Calu3 (cell line): ENCODE measurements at regions of chr9 and their contacts with region 1.

Region 1: GRCh38 chr9:98998441-98999151 is 54.9 kb downstream of the COL15A1 start:
- DNase-seq: peak; percentile 77
- H3K4me3 Mint-ChIP-seq: no peak overlapping the region
- H3K27ac Mint-ChIP-seq: no peak overlapping the region
- H3K4me1 Mint-ChIP-seq: peaks cover 3% of the 10 kb centered on the region
- H3K27me3 Mint-ChIP-seq: peaks cover 79% of the 10 kb centered on the region
- CTCF ChIP-seq: peak; percentile 73

Region 2: GRCh38 chr9:98848450-98849149 is 150.0 kb before region 1 on chr9:
- CTCF ChIA-PET with region 1: interaction called, 11 read pairs
- intact Hi-C with region 1: loop called (anchors 1 kb)
- DNase-seq: peak; percentile 90
- H3K4me3 Mint-ChIP-seq: no peak overlapping the region
- H3K27ac Mint-ChIP-seq: peak overlapping the region; percentile 77
- H3K4me1 Mint-ChIP-seq: peaks cover 10% of the 10 kb centered on the region
- H3K27me3 Mint-ChIP-seq: no peaks in the 10 kb centered on the region
- CTCF ChIP-seq: peak; percentile 56

Region 3: DNA sequence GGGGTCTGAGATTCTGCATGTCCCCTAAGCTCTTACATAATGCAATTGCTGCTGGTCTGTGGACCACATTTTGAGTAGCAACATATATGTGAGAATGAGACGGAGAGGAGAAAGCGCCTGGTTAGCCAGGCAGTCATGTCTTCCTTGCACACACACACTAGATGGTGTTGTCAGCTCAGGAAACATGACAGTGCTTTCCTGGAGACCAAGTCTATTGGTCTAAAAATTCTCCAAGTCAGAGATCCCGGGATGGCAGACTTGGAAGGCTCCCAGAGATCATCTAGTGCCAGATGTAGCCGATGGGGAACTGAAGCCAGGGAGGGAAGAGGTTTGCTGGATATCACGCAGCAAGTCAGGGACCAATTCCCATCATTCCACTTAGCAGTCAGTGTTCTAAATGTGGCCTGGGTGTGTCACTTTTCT is 137.7 kb before region 1 on chr9:
- CTCF ChIA-PET with region 1: no interaction called
- intact Hi-C with region 1: loop called (anchors 5 kb)
- DNase-seq: no peak
- H3K4me3 Mint-ChIP-seq: no peak overlapping the region
- H3K27ac Mint-ChIP-seq: no peak overlapping the region
- H3K4me1 Mint-ChIP-seq: no peaks in the 10 kb centered on the region
- H3K27me3 Mint-ChIP-seq: peaks cover 13% of the 10 kb centered on the region
- CTCF ChIP-seq: no peak

Region 4: GRCh38 chr9:99140685-99141314 is 142.2 kb after region 1 on chr9:
- CTCF ChIA-PET with region 1: interaction called, 3 read pairs
- intact Hi-C with region 1: loop called (anchors 1 kb)
- DNase-seq: peak; percentile 19
- H3K4me3 Mint-ChIP-seq: no peak overlapping the region
- H3K27ac Mint-ChIP-seq: no peak overlapping the region
- H3K4me1 Mint-ChIP-seq: peaks cover 9% of the 10 kb centered on the region
- H3K27me3 Mint-ChIP-seq: no peaks in the 10 kb centered on the region
- CTCF ChIP-seq: peak; percentile 31

Region 5: DNA sequence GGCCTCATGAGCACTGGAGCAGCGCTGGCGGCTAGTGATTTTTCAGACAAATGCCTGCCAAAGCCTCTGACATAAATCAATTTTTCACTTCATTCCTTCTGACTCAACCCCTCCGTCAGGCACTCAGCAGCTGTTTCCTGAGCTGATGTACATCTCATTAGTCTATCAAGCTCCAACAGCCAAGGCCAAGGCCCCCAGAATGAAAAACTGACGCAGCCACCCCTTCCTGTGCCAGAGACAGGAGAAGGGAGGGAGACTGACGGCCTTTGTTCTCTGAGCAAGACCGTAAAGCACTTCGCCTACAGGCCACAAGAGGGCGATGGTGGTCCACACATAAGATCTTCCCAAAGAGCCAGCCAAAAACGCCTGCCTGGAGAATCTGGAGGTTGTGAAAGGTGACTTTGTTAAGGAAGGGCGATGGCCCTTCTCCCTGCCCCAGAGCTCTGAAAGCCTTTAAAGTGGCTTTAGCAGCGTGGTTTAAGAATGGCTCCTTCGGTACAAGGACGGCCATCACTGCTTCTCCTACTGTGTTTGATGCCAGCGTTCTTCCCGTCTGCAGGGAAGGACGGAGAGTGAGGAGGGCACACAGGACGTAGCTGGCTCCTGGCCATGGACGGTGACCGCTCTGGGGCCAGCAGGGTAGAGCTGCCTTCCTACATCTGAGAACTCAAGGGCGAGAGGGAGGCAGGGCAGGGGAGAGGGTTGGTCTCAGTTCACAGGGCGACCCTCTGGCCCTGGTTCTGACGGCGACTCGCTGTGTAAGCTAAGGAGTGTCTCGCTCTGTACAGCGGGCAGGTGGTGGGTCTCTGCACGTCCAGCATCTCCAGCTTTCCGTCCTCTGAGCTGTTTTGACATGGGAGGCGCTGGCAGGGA is 186.1 kb after region 1 on chr9:
- CTCF ChIA-PET with region 1: no interaction called
- intact Hi-C with region 1: no loop called
- DNase-seq: peak; percentile 68
- H3K4me3 Mint-ChIP-seq: peak overlapping the region; percentile 54
- H3K27ac Mint-ChIP-seq: peak overlapping the region; percentile 29
- H3K4me1 Mint-ChIP-seq: peaks cover 8% of the 10 kb centered on the region
- H3K27me3 Mint-ChIP-seq: peaks cover 20% of the 10 kb centered on the region
- CTCF ChIP-seq: peak; percentile 84